CD8-positive, alpha-beta T cell (primary cell): ENCODE measurements at regions of chr9 and their contacts with region 1.

Region 1: DNA sequence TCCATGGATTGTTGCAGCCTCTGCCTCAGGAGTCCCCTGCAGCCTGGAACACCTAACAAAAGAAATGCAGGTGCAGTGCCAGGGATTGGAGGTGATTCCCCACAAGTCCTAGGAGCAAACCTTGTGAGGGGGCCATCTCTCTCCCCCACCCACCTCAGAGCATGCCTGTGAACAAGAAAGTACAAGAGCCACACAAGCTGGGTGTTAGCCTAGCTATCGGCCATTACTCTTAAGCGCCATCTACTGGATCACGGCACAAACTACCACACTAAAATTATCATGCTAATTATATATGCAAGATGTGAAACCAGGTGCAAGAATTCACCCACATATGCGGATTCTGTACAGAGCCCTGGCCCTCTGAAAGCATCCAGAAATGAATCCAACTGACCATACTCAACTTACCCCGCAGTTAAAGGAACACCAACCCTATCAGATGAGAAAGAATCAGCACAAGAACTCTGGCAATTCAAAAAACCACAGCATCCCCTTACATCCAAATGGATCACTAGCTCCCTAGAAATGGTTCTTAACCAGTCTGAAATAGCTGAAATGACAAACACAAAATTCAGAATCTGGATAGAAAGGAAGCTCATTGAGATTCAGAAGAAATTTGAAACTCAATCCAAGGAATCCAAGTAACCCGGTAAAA is 16.5 kb upstream of the PRSS3 start:
- DNase-seq: peak in 8 of 9 experiments; percentile 20 to 77 (median 42)
- ATAC-seq: peak; percentile 95
- H3K4me3 ChIP-seq: no peak overlapping the region
- H3K4me3 Mint-ChIP-seq: no peak overlapping the region
- H3K27ac ChIP-seq: no peak overlapping the region
- H3K27ac Mint-ChIP-seq: no peak overlapping the region
- H3K4me1 ChIP-seq: no peaks in the 10 kb centered on the region
- H3K4me1 Mint-ChIP-seq: peaks cover 3% of the 10 kb centered on the region
- H3K27me3 ChIP-seq: no peaks in the 10 kb centered on the region
- H3K27me3 Mint-ChIP-seq: peaks cover 6% of the 10 kb centered on the region
- CTCF ChIP-seq: peak; percentile 85

Region 2: GRCh38 chr9:33737811-33738606 is 40.8 kb before region 1 on chr9:
- CTCF ChIA-PET with region 1: interaction called, 19 read pairs
- POLR2A ChIA-PET with region 1: no interaction called
- intact Hi-C with region 1: loop called (anchors 1 kb)
- DNase-seq: peak in 2 of 9 experiments; percentile 42 to 61
- ATAC-seq: peak; percentile 42
- H3K4me3 ChIP-seq: no peak overlapping the region
- H3K4me3 Mint-ChIP-seq: no peak overlapping the region
- H3K27ac ChIP-seq: no peak overlapping the region
- H3K27ac Mint-ChIP-seq: no peak overlapping the region
- H3K4me1 ChIP-seq: no peaks in the 10 kb centered on the region
- H3K4me1 Mint-ChIP-seq: no peaks in the 10 kb centered on the region
- H3K27me3 ChIP-seq: no peaks in the 10 kb centered on the region
- H3K27me3 Mint-ChIP-seq: peaks cover 14% of the 10 kb centered on the region
- CTCF ChIP-seq: peak; percentile 33

Region 3: GRCh38 chr9:33762343-33762742 is 16.5 kb before region 1 on chr9:
- CTCF ChIA-PET with region 1: interaction called, 12 read pairs
- POLR2A ChIA-PET with region 1: no interaction called
- intact Hi-C with region 1: no loop called
- DNase-seq: no peak
- ATAC-seq: no peak
- H3K4me3 ChIP-seq: no peak overlapping the region
- H3K4me3 Mint-ChIP-seq: no peak overlapping the region
- H3K27ac ChIP-seq: no peak overlapping the region
- H3K27ac Mint-ChIP-seq: no peak overlapping the region
- H3K4me1 ChIP-seq: no peaks in the 10 kb centered on the region
- H3K4me1 Mint-ChIP-seq: no peaks in the 10 kb centered on the region
- H3K27me3 ChIP-seq: no peaks in the 10 kb centered on the region
- H3K27me3 Mint-ChIP-seq: peaks cover 19% of the 10 kb centered on the region
- CTCF ChIP-seq: no peak

Region 4: DNA sequence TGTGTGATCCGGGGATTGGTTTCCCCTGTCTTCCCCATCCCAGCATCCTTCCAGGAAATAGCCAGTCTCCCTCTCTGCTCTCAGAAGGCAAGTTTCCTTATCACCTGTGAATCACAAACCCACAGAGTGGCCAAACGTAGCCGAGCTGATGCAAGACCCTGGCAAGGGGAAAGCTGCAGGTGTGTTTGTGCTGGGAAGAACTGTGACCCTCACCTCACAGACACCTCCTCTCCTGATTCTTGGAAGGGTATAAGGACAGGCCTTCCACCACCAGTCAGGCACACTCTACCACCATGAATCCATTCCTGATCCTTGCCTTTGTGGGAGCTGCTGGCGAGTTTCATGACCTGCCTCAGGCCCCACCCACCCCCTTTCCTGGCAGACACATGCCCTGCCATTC is 16.5 kb after region 1 on chr9 and contains the start of gene PRSS3:
- CTCF ChIA-PET with region 1: no interaction called
- POLR2A ChIA-PET with region 1: no interaction called
- intact Hi-C with region 1: no loop called
- DNase-seq: no peak
- ATAC-seq: no peak
- H3K4me3 ChIP-seq: no peak within 1 kb of the TSS
- H3K4me3 Mint-ChIP-seq: no peak within 1 kb of the TSS
- H3K27ac ChIP-seq: no peak within 1 kb of the TSS
- H3K27ac Mint-ChIP-seq: no peak within 1 kb of the TSS
- H3K4me1 ChIP-seq: no peaks in the 10 kb centered on the region
- H3K4me1 Mint-ChIP-seq: no peaks in the 10 kb centered on the region
- H3K27me3 ChIP-seq: no peaks in the 10 kb centered on the region
- H3K27me3 Mint-ChIP-seq: peaks cover 15% of the 10 kb centered on the region
- CTCF ChIP-seq: no peak
- total RNA-seq, gene PRSS3: not detected